ENCODE measurements at regions of chr16 and their contacts with region 1.

Region 1: GRCh38 chr16:714558-715476 is at the start of gene METRN:
- DNase-seq: peak; percentile 87 to 95 (median 93)
- H3K4me3 ChIP-seq: peak within 1 kb of the TSS in 2 of 4 donors; percentile 37 to 76
- H3K27ac ChIP-seq: peak within 1 kb of the TSS in 3 of 5 donors; percentile 42 to 62 (median 56)
- H3K4me1 ChIP-seq: peaks cover 17 to 29% of the 10 kb centered on the region in 2 donors
- H3K27me3 ChIP-seq: peaks cover 6% of the 10 kb centered on the region
- CTCF ChIP-seq: no peak
- POLR2A ChIP-seq: peak in 1 of 2 donors; percentile 27
- total RNA-seq, gene METRN: 9.6 to 189 (median 58.6) TPM

Region 2: GRCh38 chr16:788394-789126 is 73.7 kb after region 1 on chr16 and contains the start of gene CHTF18:
- intact Hi-C with region 1: loop called in 1 of 2 experiments (anchors 5 kb)
- DNase-seq: peak; percentile 89 to 95 (median 93)
- H3K4me3 ChIP-seq: peak within 1 kb of the TSS; percentile 56 to 100 (median 91)
- H3K27ac ChIP-seq: peak within 1 kb of the TSS in 3 of 5 donors; percentile 59 to 88 (median 64)
- H3K4me1 ChIP-seq: peaks cover 16 to 22% of the 10 kb centered on the region in 2 donors
- H3K27me3 ChIP-seq: no peaks in the 10 kb centered on the region
- CTCF ChIP-seq: no peak
- POLR2A ChIP-seq: no peak
- total RNA-seq, gene CHTF18: 1.7 to 25.7 (median 10.0) TPM

Region 3: DNA sequence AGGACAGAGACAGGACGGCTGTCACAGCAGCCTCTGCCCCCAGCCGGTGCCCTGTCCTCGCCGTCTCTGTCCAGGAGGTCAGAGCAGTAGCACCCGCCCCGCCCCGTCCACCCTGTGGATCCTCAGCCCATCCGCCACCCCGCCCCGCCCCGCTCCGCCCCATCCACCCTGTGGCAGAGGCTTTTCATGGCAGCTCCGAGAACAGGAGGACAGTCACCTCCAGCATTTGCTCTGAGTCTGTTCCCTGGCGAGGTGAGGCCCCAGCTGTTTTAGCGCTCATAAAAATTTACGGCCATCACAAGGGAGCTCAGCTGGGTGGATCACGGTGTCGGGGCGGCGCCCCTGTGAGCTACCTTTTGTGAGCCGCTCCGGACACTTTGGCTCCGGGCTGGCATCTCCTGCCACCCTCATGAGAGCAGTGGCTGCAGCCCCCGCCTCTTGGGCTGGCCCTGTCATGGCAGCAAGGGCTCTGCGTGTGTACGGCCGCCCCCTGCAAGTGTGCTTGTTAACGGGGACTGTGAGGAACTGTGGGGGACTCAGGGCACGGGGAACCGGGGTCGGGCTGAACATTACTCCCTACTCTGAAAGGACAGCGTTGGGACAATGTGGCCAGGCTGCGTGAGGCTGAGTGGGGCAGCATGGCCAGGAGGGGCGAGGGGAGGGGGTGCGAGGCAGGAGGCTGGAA is 118.0 kb after region 1 on chr16:
- intact Hi-C with region 1: no loop called
- DNase-seq: no peak
- H3K4me3 ChIP-seq: no peak overlapping the region
- H3K27ac ChIP-seq: no peak overlapping the region
- H3K4me1 ChIP-seq: no peaks in the 10 kb centered on the region
- H3K27me3 ChIP-seq: no peaks in the 10 kb centered on the region
- CTCF ChIP-seq: no peak
- POLR2A ChIP-seq: no peak

Region 4: GRCh38 chr16:867461-868385 is 152.9 kb after region 1 on chr16:
- intact Hi-C with region 1: no loop called
- DNase-seq: no peak
- H3K4me3 ChIP-seq: no peak overlapping the region
- H3K27ac ChIP-seq: no peak overlapping the region
- H3K4me1 ChIP-seq: no peaks in the 10 kb centered on the region
- H3K27me3 ChIP-seq: no peaks in the 10 kb centered on the region
- CTCF ChIP-seq: no peak
- POLR2A ChIP-seq: no peak